ENCODE measurements at regions of chr3 and their contacts with region 1.

Region 1: DNA sequence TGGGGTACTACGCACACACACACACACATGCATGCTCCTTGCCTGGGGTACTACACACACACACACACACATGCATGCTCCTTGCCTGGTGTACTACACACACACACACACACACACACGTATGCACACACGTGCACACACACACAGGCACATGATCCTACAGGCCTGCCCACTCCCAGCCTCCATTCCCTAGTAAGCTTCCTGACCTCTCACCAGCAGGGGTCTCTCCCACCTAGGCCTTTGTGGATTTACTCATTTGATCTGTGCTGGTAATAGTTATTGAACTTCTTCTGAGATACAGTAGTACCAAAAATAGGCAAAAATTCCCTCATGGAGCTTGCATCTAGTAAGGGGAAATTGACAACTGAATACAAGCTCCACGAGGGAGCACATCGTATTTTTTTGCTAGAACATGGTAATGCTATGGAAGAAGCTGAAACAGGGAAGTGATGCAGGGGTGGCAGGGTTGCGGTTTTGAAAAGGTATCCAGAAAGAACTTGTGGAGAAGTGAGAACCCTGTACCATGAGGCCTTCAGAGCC is 19.1 kb downstream of the TTC21A start:
- DNase-seq: peak in 8 of 35 experiments; percentile 22 to 56 (median 36)
- ATAC-seq: peak in 3 of 4 experiments; percentile 43 to 58 (median 58)
- H3K4me3 ChIP-seq: no peak overlapping the region
- H3K4me3 Mint-ChIP-seq: no peak overlapping the region
- H3K27ac ChIP-seq: no peak overlapping the region
- H3K27ac Mint-ChIP-seq: peak overlapping the region in 1 of 2 donors; percentile 28
- H3K4me1 ChIP-seq: peaks cover 10 to 21% of the 10 kb centered on the region in 2 experiments
- H3K4me1 Mint-ChIP-seq: peaks cover 24 to 32% (median 25%) of the 10 kb centered on the region in 3 donors
- H3K27me3 ChIP-seq: peaks cover 0 to 3% of the 10 kb centered on the region in 2 experiments
- H3K27me3 Mint-ChIP-seq: no peaks in the 10 kb centered on the region

Region 2: DNA sequence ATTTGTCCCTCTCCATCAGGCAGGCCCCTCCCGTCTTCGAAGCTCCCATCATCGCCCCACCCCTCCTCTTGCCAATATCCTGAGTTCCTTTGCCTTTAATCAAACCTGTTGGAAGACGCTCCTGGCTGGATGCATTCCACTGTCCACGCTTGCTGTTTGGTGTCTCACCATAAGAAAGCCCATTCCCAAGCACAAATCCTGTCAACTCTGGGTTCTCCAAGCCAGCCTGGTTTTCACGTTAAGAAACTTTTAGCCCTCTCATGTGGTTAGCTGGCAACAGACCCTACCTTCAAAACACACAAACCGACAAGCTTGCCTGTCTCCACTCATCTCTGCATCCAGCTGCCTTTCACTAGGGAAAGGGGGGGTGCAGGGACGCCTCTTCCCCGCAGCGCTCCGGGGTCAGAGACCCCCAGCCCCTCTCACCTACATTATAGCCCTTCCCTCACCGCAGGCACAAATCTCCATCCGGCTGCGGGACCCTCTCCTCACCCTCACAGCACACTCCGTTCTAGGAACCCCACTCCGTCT is 20.3 kb before region 1 on chr3:
- CTCF ChIA-PET with region 1: interaction called, 3 to 11 read pairs
- POLR2A ChIA-PET with region 1: no interaction called
- DNase-seq: no peak
- ATAC-seq: no peak
- H3K4me3 ChIP-seq: peak overlapping the region; percentile 78 to 91
- H3K4me3 Mint-ChIP-seq: peak overlapping the region; percentile 82 to 95 (median 85)
- H3K27ac ChIP-seq: peak overlapping the region; percentile 48
- H3K27ac Mint-ChIP-seq: peak overlapping the region; percentile 88 to 92
- H3K4me1 ChIP-seq: peaks cover 7 to 38% of the 10 kb centered on the region in 2 experiments
- H3K4me1 Mint-ChIP-seq: peaks cover 60 to 71% (median 65%) of the 10 kb centered on the region in 3 donors
- H3K27me3 ChIP-seq: no peaks in the 10 kb centered on the region
- H3K27me3 Mint-ChIP-seq: no peaks in the 10 kb centered on the region

Region 3: GRCh38 chr3:39169712-39170111 is 43.1 kb after region 1 on chr3:
- CTCF ChIA-PET with region 1: interaction called, 3 read pairs
- POLR2A ChIA-PET with region 1: interaction called in 1 of 2 experiments, 11 read pairs
- DNase-seq: no peak
- ATAC-seq: no peak
- H3K4me3 ChIP-seq: no peak overlapping the region
- H3K4me3 Mint-ChIP-seq: no peak overlapping the region
- H3K27ac ChIP-seq: no peak overlapping the region
- H3K27ac Mint-ChIP-seq: no peak overlapping the region
- H3K4me1 ChIP-seq: no peaks in the 10 kb centered on the region
- H3K4me1 Mint-ChIP-seq: no peaks in the 10 kb centered on the region
- H3K27me3 ChIP-seq: no peaks in the 10 kb centered on the region
- H3K27me3 Mint-ChIP-seq: no peaks in the 10 kb centered on the region